Common myeloid progenitor, CD34-positive (primary cell): ENCODE measurements at regions of chr21 and their contacts with region 1.

Region 1: DNA sequence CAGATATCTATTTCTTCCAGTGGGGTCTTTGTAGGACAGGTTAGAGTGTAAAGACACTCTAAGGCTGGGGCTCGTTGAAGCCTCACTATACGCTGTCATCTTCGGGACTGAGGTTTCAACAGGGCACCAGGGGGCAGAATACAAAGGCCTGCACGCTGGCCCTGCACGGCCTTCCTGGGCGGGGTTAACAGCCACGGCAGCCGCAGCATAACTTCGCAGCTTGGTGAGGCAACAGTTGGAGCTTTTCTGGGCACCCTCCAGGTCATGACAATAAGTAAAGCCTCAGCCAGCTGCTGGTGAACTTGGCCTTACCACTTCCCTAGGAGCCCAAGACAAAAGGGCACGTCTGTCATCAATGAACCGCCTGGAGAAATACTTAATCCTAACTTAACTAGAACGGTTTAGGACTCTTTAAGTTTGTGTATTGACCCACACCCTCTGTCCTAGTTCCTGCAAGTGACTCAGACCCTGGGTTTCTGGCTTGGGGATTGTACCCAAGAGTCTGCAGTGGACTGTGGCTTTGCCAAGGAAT is 2.3 kb upstream of the RUNX1 start:
- DNase-seq: peak; percentile 94 to 98 (median 98)
- H3K4me3 ChIP-seq: peak overlapping the region in 3 of 7 experiments; percentile 11 to 32 (median 21)
- H3K27ac ChIP-seq: peak overlapping the region in 1 of 2 experiments; percentile 55
- H3K4me1 ChIP-seq: peaks cover 22 to 53% (median 41%) of the 10 kb centered on the region in 4 experiments
- H3K27me3 ChIP-seq: no peaks in the 10 kb centered on the region

Region 2: DNA sequence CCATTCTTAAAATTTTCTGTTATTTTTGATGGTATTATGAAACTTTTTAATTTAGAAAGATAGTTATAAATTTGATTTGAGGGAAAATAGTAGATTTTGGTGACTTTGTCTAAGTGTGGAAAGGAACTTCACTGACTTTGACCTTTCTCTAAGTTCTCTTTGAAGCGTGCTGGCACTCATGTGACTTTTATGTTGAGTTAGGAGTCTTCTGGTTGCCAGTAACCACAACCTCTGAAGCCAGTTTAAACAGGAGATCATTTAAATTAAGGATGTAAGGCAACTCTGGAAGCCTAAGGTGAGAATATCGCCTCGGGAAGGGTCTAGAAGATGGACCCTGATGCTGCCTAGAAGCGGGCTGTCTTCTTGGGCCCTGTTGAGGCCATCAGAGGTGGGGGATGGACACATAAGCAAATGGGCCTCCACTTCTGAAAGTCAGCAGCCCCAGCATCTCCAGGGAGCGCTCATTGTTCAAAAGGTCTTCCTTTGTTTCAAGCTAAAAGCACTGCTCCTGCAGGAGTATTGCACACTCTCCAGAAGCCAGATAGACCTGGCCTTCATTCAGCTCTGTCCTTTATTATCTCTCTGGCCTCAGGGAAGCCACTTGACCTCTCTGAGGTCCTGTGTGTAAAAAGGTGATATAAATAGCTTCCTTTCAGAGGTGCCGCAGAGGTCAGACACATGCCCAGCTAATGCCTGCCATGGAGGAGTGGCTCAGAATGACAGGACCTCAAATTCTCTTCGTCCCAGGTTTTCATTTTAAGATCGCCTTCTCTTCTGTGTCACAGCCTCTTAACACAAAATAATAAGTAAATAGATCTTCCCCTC is 431.3 kb before region 1 on chr21:
- CTCF ChIA-PET with region 1: no interaction called
- POLR2A ChIA-PET with region 1: no interaction called
- DNase-seq: no peak
- H3K4me3 ChIP-seq: no peak overlapping the region
- H3K27ac ChIP-seq: no peak overlapping the region
- H3K4me1 ChIP-seq: peaks cover 0 to 11% (median 4%) of the 10 kb centered on the region in 4 experiments
- H3K27me3 ChIP-seq: no peaks in the 10 kb centered on the region

Region 3: DNA sequence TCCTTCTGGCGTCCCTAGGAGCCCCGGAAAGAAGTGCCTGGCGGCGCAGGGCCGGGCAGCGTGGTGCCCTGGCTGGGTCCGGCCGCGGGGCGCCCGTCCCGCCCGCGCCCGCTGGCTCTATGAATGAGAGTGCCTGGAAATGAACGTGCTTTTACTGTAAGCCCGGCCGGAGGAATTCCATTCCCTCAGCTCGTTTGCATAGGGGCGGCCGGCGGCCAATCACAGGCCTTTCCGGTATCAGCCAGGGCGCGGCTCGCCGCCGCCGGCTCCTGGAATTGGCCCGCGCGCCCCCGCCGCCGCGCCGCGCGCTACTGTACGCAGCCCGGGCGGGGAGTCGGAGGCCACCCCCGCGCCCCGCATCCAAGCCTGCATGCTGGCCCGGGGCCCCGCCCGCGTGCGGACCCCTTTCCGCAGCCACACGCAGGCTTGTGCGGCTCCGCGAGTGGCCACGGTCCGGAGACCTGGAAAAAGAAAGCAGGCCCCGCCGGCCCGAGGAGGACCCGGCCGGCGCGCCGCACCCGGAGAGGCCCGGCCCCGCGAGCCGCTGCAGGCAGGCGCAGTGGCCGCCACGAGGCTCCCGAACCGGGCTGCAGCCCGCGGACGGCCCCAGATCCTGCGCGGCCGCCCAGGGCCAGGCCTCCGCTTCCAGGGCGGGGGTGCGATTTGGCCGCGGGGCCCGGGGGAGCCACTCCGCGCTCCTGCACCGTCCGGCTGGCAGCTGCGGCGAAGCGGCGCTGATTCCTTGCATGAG is 162.6 kb before region 1 on chr21:
- CTCF ChIA-PET with region 1: interaction called, 46 read pairs
- POLR2A ChIA-PET with region 1: interaction called, 45 read pairs
- DNase-seq: peak; percentile 78 to 94 (median 94)
- H3K4me3 ChIP-seq: peak overlapping the region; percentile 47 to 99 (median 87)
- H3K27ac ChIP-seq: peak overlapping the region; percentile 83 to 95
- H3K4me1 ChIP-seq: peaks cover 35 to 80% (median 42%) of the 10 kb centered on the region in 4 experiments
- H3K27me3 ChIP-seq: no peaks in the 10 kb centered on the region

Region 4: GRCh38 chr21:35026617-35027562 is 24.5 kb before region 1 on chr21:
- CTCF ChIA-PET with region 1: interaction called, 37 read pairs
- POLR2A ChIA-PET with region 1: interaction called, 58 read pairs
- DNase-seq: peak; percentile 98 to 100 (median 99)
- H3K4me3 ChIP-seq: peak overlapping the region in 6 of 7 experiments; percentile 33 to 66 (median 43)
- H3K27ac ChIP-seq: peak overlapping the region; percentile 90 to 93
- H3K4me1 ChIP-seq: peaks cover 33 to 89% (median 71%) of the 10 kb centered on the region in 4 experiments
- H3K27me3 ChIP-seq: no peaks in the 10 kb centered on the region

Region 5: GRCh38 chr21:35036465-35037383 is 14.6 kb before region 1 on chr21:
- CTCF ChIA-PET with region 1: interaction called, 17 read pairs
- POLR2A ChIA-PET with region 1: interaction called, 4 read pairs
- DNase-seq: no peak
- H3K4me3 ChIP-seq: no peak overlapping the region
- H3K27ac ChIP-seq: peak overlapping the region; percentile 4 to 62
- H3K4me1 ChIP-seq: peaks cover 16 to 86% (median 65%) of the 10 kb centered on the region in 4 experiments
- H3K27me3 ChIP-seq: no peaks in the 10 kb centered on the region

Region 6: GRCh38 chr21:35204850-35205541 is 153.6 kb after region 1 on chr21:
- CTCF ChIA-PET with region 1: interaction called, 16 read pairs
- POLR2A ChIA-PET with region 1: no interaction called
- DNase-seq: peak; percentile 70 to 82 (median 79)
- H3K4me3 ChIP-seq: peak overlapping the region in 6 of 7 experiments; percentile 54 to 87 (median 68)
- H3K27ac ChIP-seq: peak overlapping the region in 1 of 2 experiments; percentile 67
- H3K4me1 ChIP-seq: peaks cover 9 to 21% (median 15%) of the 10 kb centered on the region in 4 experiments
- H3K27me3 ChIP-seq: no peaks in the 10 kb centered on the region

Region 7: DNA sequence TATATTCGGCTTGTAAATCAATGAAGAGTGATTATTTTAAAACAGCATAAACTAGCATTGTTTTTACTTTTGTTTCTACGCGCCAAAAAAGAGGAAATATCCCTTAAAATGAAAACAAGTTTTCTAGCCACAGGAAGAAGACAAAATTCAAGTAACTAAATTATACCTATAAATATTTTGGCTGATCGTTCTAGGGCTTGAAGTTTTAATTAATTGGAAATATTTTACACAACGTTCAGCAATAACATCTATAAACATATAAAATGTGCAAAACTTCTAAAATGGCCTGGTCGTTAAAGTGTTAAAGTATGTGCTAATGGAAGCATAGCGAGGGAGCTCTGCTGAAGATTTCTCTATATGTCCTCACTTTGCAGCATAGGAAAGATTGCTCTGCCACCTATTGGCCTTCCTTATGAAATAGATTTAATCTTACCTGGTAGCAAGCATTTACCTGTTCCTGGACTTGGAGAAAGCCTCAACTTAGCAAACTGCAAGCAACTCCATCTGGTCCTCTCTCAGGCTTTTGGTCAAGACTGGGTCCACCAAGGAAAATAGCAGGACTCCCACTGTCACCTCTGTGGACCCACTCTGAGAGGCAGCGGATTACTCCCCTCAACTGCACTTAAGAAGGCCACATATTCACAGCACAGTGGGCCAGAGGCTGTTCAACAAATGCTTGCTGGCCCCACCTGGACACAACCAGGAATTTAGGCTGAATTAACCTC is 349.0 kb after region 1 on chr21:
- CTCF ChIA-PET with region 1: interaction called, 32 read pairs
- POLR2A ChIA-PET with region 1: interaction called, 5 read pairs
- DNase-seq: peak; percentile 80 to 87 (median 83)
- H3K4me3 ChIP-seq: peak overlapping the region in 5 of 7 experiments; percentile 26 to 66 (median 50)
- H3K27ac ChIP-seq: peak overlapping the region in 1 of 2 experiments; percentile 10
- H3K4me1 ChIP-seq: peaks cover 22 to 43% (median 31%) of the 10 kb centered on the region in 4 experiments
- H3K27me3 ChIP-seq: no peaks in the 10 kb centered on the region

Region 8: DNA sequence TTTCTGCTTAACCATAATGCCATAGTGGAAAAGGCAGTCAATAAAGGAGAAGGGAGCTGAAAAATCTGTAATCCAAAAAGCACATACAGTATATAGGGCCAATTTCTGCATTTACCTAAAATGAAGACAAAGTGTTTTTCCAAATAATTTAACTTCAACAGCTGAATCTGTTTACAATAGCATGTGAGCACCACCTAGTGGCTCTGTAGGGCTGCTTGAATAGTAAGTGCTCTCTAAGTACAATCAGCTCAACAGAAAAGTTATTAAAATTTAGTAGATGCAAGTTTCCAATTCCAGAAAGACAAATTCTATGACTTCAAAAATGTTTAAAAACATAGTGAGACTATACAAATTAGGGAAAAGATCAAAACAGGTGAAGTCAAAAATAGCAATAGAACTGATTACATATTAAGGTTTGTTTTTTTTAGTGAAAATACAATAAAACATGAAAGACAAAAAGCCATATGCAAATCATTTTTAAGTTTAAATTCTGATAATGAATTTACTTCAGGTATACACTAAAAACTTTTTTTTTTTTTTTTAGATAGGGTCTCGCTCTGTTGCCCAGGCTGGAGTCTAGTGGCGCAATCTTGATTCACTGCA is 788.9 kb after region 1 on chr21:
- CTCF ChIA-PET with region 1: interaction called, 11 read pairs
- POLR2A ChIA-PET with region 1: no interaction called
- DNase-seq: peak; percentile 82 to 93 (median 90)
- H3K4me3 ChIP-seq: no peak overlapping the region
- H3K27ac ChIP-seq: no peak overlapping the region
- H3K4me1 ChIP-seq: no peaks in the 10 kb centered on the region
- H3K27me3 ChIP-seq: no peaks in the 10 kb centered on the region